SK-N-SH (cell line): ENCODE measurements at regions of chr1 and their contacts with region 1.

Region 1: GRCh38 chr1:154943649-154944400 is 7.3 kb upstream of the PMVK start:
- DNase-seq: peak; percentile 83
- H3K4me3 ChIP-seq: no peak overlapping the region
- H3K27ac ChIP-seq: no peak overlapping the region
- H3K4me1 ChIP-seq: peaks cover 4 to 25% of the 10 kb centered on the region in 2 experiments; a peak in 2 of 4 replicates
- H3K27me3 ChIP-seq: no peaks in the 10 kb centered on the region
- CTCF ChIP-seq: peak; percentile 82
- EP300 ChIP-seq: no peak
- RAD21 ChIP-seq: peak; percentile 80

Region 2: DNA sequence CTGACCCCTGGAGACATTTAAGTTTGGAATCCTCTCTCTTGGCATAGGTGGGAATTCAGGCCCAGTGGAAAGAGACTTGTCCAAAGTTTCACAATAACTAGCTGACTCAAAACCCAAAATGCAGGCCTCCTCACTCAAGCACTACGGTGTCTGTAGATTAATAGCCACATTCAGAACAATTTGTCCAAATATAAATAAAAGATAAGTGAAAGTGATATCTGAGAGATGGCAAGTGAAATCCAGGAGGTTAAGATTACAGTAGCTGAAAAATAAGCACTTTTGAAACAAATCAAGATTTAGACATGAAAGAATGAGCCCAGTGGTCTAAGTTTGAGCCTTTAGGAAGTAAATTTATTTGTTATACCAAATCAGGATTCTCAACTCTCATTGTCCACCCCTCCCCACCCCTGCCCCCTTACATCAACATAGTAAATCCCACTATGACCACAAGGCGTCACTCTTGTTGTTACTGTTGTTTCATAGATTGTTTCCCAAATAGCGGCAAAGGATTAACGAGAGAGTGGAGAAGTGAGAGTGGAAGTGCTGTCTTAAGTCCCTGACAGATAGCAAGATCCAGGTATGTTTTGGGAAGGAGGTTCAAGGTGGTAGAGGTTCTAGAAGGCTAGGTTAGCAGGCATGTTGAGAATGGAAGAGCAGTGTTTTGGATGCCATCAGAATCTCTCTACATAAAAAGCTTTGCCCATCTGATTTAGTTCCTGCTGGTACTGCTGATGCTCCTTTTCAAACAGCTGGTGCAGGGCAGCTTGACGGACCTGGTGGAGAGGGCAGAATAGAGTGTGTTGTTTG is 744.9 kb before region 1 on chr1:
- CTCF ChIA-PET with region 1: no interaction called
- POLR2A ChIA-PET with region 1: no interaction called
- DNase-seq: peak; percentile 78
- H3K4me3 ChIP-seq: no peak overlapping the region
- H3K27ac ChIP-seq: no peak overlapping the region
- H3K4me1 ChIP-seq: peaks cover 0 to 2% of the 10 kb centered on the region in 2 experiments; a peak in 1 of 4 replicates
- H3K27me3 ChIP-seq: no peaks in the 10 kb centered on the region
- CTCF ChIP-seq: peak; percentile 64
- EP300 ChIP-seq: no peak
- RAD21 ChIP-seq: peak; percentile 70

Region 3: DNA sequence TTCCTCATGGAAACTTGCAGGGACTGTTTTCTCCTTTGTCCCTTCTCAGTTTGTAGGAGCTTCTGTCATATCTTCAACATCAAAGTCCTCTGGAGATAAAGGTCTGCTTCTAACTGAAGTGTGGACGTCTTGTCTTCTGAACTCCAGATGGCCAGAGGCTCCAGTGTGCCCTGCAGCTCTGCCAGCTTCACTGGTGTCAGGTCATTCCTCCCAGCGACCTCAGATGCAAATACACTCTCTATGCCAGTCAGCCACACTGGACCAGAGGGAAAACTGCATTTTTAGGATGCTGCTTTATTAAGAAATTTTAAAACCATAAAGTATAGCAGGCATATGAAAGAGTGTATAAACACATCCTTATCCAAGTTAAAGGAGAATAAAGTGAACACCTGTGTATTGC is 257.3 kb before region 1 on chr1:
- CTCF ChIA-PET with region 1: no interaction called
- POLR2A ChIA-PET with region 1: no interaction called
- DNase-seq: peak; percentile 27
- H3K4me3 ChIP-seq: no peak overlapping the region
- H3K27ac ChIP-seq: no peak overlapping the region
- H3K4me1 ChIP-seq: no peaks in the 10 kb centered on the region; a peak in 1 of 4 replicates
- H3K27me3 ChIP-seq: peaks cover 12% of the 10 kb centered on the region
- CTCF ChIP-seq: no peak
- EP300 ChIP-seq: no peak
- RAD21 ChIP-seq: no peak

Region 4: GRCh38 chr1:154955718-154956543 is 12.1 kb after region 1 on chr1 and contains the start of gene PBXIP1:
- CTCF ChIA-PET with region 1: interaction called, 5 read pairs
- POLR2A ChIA-PET with region 1: interaction called, 10 read pairs
- DNase-seq: peak; percentile 94
- H3K4me3 ChIP-seq: peak within 1 kb of the TSS; percentile 74 to 79
- H3K27ac ChIP-seq: peak within 1 kb of the TSS; percentile 90 to 91
- H3K4me1 ChIP-seq: peaks cover 0 to 51% of the 10 kb centered on the region in 2 experiments; a peak in 3 of 4 replicates
- H3K27me3 ChIP-seq: no peaks in the 10 kb centered on the region
- CTCF ChIP-seq: peak; percentile 53
- EP300 ChIP-seq: no peak
- RAD21 ChIP-seq: peak; percentile 55
- polyA plus RNA-seq, gene PBXIP1: 55.9 and 64.3 TPM in 2 replicates